Ovary (tissue), 10 donors: ENCODE measurements at regions of chr19 and their contacts with region 1.

Region 1: DNA sequence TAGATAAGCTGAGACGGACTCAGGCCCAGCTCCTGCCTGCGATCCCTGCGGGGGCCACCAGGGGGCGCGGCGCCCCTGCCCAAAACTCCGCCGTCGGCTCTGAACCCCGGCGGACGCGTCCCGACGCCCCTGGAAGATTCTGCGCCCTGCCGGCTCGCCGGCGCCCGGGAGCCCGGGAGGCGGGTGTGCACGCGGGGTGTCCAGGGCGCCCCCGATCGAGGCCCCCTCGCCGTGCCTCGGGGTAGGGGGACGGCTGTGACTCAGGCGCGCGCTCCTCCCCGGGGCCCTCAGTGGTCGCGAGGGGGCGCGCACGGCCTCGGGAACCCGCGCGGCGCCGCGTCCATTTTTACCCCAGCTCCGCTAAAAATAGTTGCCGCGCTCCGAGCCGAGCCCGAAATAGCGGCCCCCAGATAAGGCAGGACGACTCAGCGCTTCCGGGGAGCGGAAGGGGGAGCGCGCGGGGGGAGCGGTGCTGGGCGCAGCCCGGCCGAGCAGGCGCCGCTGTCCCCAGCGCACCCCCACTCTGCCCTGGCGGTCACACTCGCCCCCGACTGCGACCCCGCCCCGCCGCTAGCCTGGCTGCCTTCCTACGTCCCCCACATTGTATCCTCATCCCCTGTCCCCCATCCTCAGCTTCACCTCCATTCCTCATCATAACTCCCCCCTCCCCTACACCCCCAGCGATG is 16.0 kb upstream of the ERCC1 start:
- DNase-seq: peak; percentile 93 to 95 (median 93)
- H3K4me3 ChIP-seq: peak overlapping the region; percentile 65
- H3K27ac ChIP-seq: peak overlapping the region; percentile 96 to 98
- H3K4me1 ChIP-seq: peaks cover 5% of the 10 kb centered on the region
- H3K27me3 ChIP-seq: no peaks in the 10 kb centered on the region
- CTCF ChIP-seq: peak; percentile 99 to 100 (median 100)
- EP300 ChIP-seq: peak; percentile 33
- POLR2A ChIP-seq: peak; percentile 43

Region 2: DNA sequence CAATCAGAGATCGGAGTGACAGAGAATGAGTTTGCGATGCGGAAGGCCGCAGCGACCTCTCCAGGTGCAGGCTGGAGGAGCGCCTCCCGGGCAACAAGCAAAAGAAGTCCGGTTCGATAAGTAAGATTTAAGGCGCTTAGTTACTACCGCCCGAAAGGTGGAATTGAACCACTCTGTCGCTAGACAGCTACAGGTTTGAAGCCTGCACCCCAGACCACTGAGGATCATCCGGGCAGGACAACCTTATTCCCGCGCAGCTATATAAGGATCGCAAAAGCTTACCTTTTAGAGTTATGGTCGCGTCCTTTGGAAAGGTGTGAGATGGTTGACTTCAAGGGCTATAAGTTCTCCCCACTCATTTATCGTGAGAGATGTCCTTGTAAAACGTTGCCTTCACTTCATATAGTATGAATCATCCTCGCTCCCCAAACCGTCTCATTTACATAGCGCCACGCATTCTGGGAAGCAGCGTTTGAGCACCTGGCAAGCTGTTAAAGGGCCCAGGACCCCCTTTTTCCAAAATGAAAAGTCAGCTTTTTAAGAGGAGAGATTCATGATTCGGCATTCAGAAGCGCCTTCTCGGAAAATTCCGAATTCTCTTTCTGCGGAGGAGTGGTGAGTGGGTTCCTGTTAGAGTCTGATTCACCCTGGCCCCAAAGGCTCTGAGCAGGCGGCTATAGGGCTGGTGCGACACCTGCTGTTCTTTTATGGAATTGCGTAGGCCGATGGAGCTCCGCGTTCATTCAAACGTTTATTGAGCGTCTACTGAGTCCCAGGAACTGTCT is 38.9 kb after region 1 on chr19:
- intact Hi-C with region 1: loop called (anchors 1 to 2 kb)
- DNase-seq: peak; percentile 78 to 88 (median 87)
- H3K4me3 ChIP-seq: peak overlapping the region; percentile 53
- H3K27ac ChIP-seq: peak overlapping the region; percentile 89 to 96
- H3K4me1 ChIP-seq: no peaks in the 10 kb centered on the region
- H3K27me3 ChIP-seq: no peaks in the 10 kb centered on the region
- CTCF ChIP-seq: peak; percentile 80 to 99 (median 98)
- EP300 ChIP-seq: no peak
- POLR2A ChIP-seq: no peak

Region 3: DNA sequence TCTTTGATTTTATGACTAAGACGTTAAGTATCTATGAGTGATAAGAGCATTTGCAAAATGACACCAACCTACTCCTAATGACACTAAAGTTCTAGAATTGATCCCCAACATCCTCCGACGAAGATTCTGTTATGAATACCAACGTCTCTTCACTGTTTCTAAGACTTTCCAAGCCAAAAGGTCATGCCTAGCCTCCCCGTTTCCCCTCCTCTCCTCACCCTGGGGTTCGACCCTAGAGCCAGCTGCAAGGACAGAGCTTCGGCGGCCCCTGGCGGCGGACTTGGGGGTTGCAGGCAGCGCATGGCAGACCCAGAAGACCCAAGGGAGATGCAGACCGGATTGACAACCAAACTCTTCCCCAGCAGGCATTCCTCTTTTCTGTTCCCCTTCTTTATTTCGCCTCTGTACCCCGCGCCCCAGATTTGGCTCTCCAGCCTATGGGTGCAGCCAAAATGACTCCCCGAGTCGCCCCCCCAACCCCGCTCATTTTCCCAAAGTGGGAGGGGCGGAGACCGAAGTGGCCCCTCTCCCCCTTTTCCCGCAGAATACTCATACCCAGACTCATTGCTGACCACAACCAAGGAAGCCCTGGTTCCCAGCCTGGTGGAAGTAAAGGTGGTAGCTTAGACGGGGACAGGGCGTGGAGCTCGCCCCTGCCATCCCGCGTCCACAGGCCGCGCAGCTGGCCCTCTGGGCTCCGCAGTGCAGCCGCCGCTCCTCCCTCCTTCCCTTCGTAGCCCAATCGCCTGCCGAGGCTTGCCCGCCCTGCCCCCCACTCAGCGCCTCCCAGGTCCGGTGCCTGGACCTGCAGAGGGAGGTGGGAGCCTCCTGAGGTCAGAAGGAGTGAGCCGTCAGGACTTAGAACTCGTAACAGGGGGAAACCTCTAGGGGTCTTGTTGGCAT is 203.6 kb after region 1 on chr19:
- intact Hi-C with region 1: loop called in 1 of 4 experiments (anchors 10 kb)
- DNase-seq: peak; percentile 65 to 89 (median 79)
- H3K4me3 ChIP-seq: no peak overlapping the region
- H3K27ac ChIP-seq: no peak overlapping the region
- H3K4me1 ChIP-seq: peaks cover 4% of the 10 kb centered on the region
- H3K27me3 ChIP-seq: peaks cover 3% of the 10 kb centered on the region
- CTCF ChIP-seq: peak; percentile 84 to 94 (median 89)
- EP300 ChIP-seq: no peak
- POLR2A ChIP-seq: no peak